WTC11 (cell line): ENCODE measurements at regions of chr20 and their contacts with region 1.

Region 1: DNA sequence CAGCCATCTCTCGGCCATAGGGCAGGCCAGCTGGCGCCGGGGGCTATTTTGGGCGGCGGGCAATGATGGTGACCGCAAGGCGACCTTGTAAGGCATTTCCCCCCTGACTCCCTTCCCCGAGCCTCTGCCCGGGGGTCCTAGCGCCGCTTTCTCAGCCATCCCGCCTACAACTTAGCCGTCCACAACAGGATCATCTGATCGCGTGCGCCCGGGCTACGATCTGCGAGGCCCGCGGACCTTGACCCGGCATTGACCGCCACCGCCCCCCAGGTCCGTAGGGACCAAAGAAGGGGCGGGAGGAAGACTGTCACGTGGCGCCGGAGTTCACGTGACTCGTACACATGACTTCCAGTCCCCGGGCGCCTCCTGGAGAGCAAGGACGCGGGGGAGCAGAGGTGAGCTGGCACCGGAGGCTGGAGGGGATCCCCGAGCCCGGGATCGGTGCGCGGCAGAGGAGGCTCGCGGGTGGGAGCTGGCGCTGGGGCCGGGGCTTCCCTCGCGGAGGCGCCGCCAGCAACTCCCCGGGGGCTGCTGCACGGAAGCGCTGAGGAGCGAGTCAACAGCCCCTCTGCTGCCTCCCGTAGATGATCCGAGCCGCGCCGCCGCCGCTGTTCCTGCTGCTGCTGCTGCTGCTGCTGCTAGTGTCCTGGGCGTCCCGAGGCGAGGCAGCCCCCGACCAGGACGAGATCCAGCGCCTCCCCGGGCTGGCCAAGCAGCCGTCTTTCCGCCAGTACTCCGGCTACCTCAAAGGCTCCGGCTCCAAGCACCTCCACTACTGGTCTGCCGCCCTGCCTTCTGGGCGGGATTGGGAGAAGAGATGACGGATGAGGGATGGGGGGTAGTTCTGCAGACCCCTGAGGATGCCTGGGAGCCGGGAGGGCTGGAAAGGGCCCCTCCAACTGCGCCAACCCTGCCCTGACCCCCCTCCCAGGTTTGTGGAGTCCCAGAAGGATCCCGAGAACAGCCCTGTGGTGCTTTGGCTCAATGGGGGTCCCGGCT is at the starts of genes CTSA and NEURL2:
- DNase-seq: peak; percentile 91
- ATAC-seq: peak; percentile 33
- H3K4me3 Mint-ChIP-seq: peak within 1 kb of the TSS; percentile 87
- H3K27ac Mint-ChIP-seq: peak within 1 kb of the TSS; percentile 78; the same call in 1 of the 2 replicates
- H3K4me1 Mint-ChIP-seq: peaks cover 12% of the 10 kb centered on the region
- H3K27me3 Mint-ChIP-seq: no peaks in the 10 kb centered on the region; the same call in 1 of the 2 replicates
- CTCF ChIP-seq: no peak
- total RNA-seq, gene CTSA: 44.2 to 48.3 TPM (median 47.2 TPM) in 3 replicates
- total RNA-seq, gene NEURL2: 6.1 to 8.3 TPM (median 6.6 TPM) in 3 replicates

Region 2: GRCh38 chr20:45788351-45788750 is 102.9 kb before region 1 on chr20:
- CTCF ChIA-PET with region 1: no interaction called
- POLR2A ChIA-PET with region 1: no interaction called
- DNase-seq: no peak
- ATAC-seq: no peak
- H3K4me3 Mint-ChIP-seq: no peak overlapping the region
- H3K27ac Mint-ChIP-seq: no peak overlapping the region
- H3K4me1 Mint-ChIP-seq: peaks cover 8% of the 10 kb centered on the region
- H3K27me3 Mint-ChIP-seq: no peaks in the 10 kb centered on the region
- CTCF ChIP-seq: no peak

Region 3: GRCh38 chr20:45798935-45799642 is 92.2 kb before region 1 on chr20:
- CTCF ChIA-PET with region 1: interaction called, 12 read pairs
- POLR2A ChIA-PET with region 1: no interaction called
- DNase-seq: peak; percentile 75
- ATAC-seq: peak; percentile 99
- H3K4me3 Mint-ChIP-seq: no peak overlapping the region
- H3K27ac Mint-ChIP-seq: no peak overlapping the region
- H3K4me1 Mint-ChIP-seq: peaks cover 4% of the 10 kb centered on the region; the same call in 1 of the 2 replicates
- H3K27me3 Mint-ChIP-seq: no peaks in the 10 kb centered on the region
- CTCF ChIP-seq: peak; percentile 64

Region 4: DNA sequence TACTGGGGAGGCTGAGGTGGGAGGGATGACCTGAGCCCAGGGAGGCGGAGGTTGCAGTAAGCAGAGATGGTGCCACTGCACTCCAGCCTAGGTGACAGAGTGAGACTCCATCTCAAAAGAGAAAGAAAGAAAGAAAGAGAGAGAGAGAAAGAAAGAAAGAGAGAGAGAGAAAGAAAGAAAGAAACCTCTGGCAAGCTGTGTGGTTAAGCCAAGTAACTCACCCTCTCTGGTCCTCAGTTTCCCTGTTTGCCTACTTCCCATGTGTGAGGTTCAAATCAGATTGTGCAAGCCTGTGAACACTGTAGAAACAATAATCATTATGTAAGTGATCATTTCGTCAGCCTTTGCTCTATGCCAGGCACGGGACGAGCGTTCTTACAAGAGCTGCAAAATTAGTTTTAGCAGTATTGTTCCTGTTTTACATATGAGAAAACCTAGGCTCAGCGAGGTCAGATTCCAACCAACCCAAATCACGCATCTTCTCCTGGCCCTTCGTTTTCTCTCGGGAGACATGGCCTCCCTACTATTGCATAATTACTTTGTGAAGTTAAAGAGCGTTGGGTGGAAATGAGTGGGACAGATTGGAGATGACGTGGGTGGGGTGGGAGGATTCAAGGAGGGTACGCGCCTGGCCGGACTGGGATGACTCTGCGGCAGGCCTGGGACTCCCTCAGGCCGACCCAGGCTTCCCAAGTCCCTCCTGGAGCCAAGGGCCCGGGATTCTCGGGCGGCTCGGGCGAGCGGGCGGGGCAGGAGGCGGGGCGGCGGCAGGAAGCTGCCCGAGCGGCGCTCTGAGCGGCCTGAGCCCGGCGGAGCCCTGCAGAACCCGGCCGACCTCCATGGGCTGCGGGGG is 58.0 kb before region 1 on chr20 and contains the start of gene SNX21:
- CTCF ChIA-PET with region 1: interaction called, 12 read pairs
- POLR2A ChIA-PET with region 1: no interaction called
- DNase-seq: peak; percentile 86
- ATAC-seq: peak; percentile 91
- H3K4me3 Mint-ChIP-seq: peak within 1 kb of the TSS; percentile 76
- H3K27ac Mint-ChIP-seq: peak within 1 kb of the TSS; percentile 88
- H3K4me1 Mint-ChIP-seq: peaks cover 18% of the 10 kb centered on the region
- H3K27me3 Mint-ChIP-seq: no peaks in the 10 kb centered on the region
- CTCF ChIP-seq: no peak
- total RNA-seq, gene SNX21: 17.9 to 23.1 TPM (median 21.7 TPM) in 3 replicates

Region 5: DNA sequence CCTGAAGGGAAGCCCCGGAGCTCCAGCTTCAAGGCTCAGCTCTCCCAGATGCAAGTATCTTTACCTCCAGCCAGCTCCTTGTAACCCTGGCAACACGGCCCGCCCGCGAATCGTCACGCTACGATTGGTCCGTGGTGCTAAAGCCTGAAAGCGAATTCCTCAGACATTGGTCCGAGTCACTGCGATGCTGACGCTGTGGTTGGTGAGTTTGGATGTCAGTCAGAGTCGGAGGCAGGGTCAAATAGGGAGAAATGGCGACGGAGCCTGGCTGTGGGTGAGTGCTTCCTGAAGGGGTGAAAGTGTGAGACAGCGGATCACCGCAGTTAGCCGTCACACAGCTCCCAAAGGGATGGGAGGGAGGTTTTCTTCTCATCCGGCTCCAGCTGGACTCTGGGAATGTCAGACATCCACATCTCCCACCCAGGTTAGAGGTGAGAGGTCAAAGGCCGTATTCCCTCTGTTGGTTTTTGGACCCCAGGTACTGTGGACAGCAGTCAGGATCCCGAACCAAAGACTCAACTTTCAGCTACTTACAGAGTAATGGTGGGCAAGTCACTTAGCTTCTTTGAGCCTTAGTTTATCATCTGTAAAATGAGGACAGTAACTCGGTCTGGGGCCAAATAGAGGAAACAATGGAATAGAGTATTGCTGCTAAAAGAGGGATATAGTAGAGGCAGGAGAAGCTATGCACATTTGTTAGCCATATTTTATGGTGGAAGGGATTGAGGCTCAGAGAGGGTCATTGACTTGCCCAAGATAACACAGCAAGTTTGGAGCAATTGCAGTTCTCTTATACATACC is 10.1 kb before region 1 on chr20 and contains the start of gene ZSWIM1:
- CTCF ChIA-PET with region 1: interaction called, 38 read pairs
- POLR2A ChIA-PET with region 1: interaction called, 14 read pairs
- DNase-seq: peak; percentile 100
- ATAC-seq: peak; percentile 99
- H3K4me3 Mint-ChIP-seq: peak within 1 kb of the TSS; percentile 98
- H3K27ac Mint-ChIP-seq: peak within 1 kb of the TSS; percentile 97
- H3K4me1 Mint-ChIP-seq: peaks cover 13% of the 10 kb centered on the region
- H3K27me3 Mint-ChIP-seq: no peaks in the 10 kb centered on the region
- CTCF ChIP-seq: no peak
- total RNA-seq, gene ZSWIM1: 15.2 to 17.4 TPM (median 17.0 TPM) in 3 replicates

Region 6: DNA sequence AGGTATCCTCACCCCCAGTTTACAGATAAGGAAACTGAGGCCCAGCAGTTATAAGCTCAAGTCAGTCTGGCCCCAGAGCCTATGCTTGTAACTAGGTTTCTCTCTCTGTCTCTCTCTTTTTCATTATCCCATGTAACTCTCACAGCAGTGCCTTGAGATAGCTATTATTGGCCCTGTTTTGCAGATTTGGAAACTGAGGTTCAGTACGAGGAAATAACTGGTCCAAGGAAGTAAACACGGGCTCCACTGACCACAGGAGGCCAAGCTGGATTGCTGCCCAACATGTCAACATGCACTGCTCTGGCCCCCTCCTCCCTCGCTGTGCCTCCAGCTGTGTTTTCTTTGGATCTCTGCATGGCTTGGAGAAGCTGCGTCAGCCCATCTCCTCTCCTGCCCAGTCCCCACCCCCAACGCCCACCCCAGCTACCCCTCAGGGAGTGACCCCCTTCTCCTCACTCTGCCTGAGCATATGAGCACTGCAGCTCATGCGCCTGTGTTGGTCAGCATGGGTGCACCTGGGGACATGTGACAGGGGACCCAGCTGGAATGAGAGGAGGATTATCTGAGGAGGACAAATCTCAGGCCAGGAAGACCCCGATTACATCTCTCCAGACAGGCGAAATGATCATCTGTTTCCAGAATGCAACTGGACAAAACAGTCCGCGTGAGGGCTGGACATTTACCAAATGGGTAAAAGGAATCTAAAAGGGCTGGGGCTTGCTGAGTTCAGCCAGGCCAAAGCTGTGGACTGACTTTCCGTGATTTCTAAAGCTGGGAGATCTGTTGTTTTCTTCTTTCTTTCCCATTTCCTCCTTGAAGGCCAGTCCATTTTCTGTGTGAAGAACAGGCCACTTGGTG is 28.5 kb after region 1 on chr20:
- CTCF ChIA-PET with region 1: interaction called, 13 read pairs
- POLR2A ChIA-PET with region 1: interaction called, 3 read pairs
- DNase-seq: no peak
- ATAC-seq: no peak
- H3K4me3 Mint-ChIP-seq: no peak overlapping the region
- H3K27ac Mint-ChIP-seq: no peak overlapping the region
- H3K4me1 Mint-ChIP-seq: peaks cover 7% of the 10 kb centered on the region; the same call in 1 of the 2 replicates
- H3K27me3 Mint-ChIP-seq: 0 out of 2 replicates have a peak, but pooled peaks cover 3% of the 10 kb centered on the region
- CTCF ChIP-seq: no peak

Region 7: GRCh38 chr20:45963059-45964005 is 72.0 kb after region 1 on chr20:
- CTCF ChIA-PET with region 1: interaction called, 27 read pairs
- POLR2A ChIA-PET with region 1: no interaction called
- DNase-seq: no peak
- ATAC-seq: peak; percentile 73
- H3K4me3 Mint-ChIP-seq: no peak overlapping the region
- H3K27ac Mint-ChIP-seq: peak overlapping the region; percentile 52; the same call in 1 of the 2 replicates
- H3K4me1 Mint-ChIP-seq: no peaks in the 10 kb centered on the region
- H3K27me3 Mint-ChIP-seq: no peaks in the 10 kb centered on the region
- CTCF ChIP-seq: 0 out of 2 replicates have a peak, but pooled peaks have one; percentile 21

Region 8: DNA sequence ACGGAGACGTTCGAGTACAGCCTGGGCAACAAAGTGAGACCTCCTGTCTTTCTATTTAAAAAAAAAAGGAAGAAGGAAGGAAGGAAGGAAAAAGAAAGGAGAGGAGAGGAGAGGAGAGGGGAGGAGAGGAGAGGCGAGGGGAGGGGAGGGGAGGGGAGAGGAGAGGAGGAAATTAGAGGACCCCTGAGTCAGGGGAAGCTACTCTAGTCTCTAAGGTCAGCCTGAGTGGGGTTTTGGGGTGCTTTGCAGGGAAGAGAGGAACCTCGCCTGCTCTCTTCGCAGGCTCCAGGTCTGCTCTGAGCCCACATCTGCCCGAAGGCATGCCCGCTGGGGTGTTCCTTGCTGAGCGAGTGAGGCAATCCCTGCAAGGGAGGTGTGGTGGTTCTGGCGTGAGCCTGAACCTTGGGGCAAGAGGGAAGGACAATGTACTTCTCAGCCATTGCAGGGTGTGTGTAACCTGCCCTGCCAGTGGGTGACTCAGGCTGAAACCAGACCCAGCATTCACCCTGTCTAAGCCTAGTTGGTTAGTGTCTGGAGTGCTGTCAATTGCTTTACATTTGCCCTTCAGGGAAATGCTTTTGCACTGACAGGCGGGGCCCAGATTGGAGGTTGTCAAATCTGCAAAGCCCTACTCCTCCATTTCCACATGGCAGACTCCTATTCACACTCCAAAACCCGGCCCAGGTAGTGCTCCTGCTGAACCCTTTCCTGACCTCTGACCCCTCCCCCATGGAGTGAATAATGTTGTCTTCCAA is 102.1 kb after region 1 on chr20:
- CTCF ChIA-PET with region 1: no interaction called
- POLR2A ChIA-PET with region 1: no interaction called
- DNase-seq: no peak
- ATAC-seq: peak; percentile 81
- H3K4me3 Mint-ChIP-seq: no peak overlapping the region
- H3K27ac Mint-ChIP-seq: 0 out of 2 replicates have a peak overlapping the region, but pooled peaks have one; percentile 50
- H3K4me1 Mint-ChIP-seq: peaks cover 35% of the 10 kb centered on the region
- H3K27me3 Mint-ChIP-seq: no peaks in the 10 kb centered on the region; the same call in 1 of the 2 replicates
- CTCF ChIP-seq: no peak

Region 9: GRCh38 chr20:46013826-46014516 is 122.7 kb after region 1 on chr20:
- CTCF ChIA-PET with region 1: interaction called, 15 read pairs
- POLR2A ChIA-PET with region 1: no interaction called
- DNase-seq: peak; percentile 91
- ATAC-seq: peak; percentile 60
- H3K4me3 Mint-ChIP-seq: peak overlapping the region; percentile 65
- H3K27ac Mint-ChIP-seq: no peak overlapping the region; the same call in 1 of the 2 replicates
- H3K4me1 Mint-ChIP-seq: peaks cover 39% of the 10 kb centered on the region
- H3K27me3 Mint-ChIP-seq: peaks cover 31% of the 10 kb centered on the region
- CTCF ChIP-seq: peak; percentile 83